ENCODE measurements at regions of chr2 and their contacts with region 1.

Region 1: GRCh38 chr2:15142069-15142873 is 418.9 kb downstream of the NBAS start:
- DNase-seq: peak; percentile 89
- ATAC-seq: peak; percentile 95
- H3K4me3 Mint-ChIP-seq: peak overlapping the region; percentile 35
- H3K27ac Mint-ChIP-seq: peak overlapping the region; percentile 93
- H3K4me1 Mint-ChIP-seq: peaks cover 26% of the 10 kb centered on the region
- H3K27me3 Mint-ChIP-seq: peaks cover 3% of the 10 kb centered on the region

Region 2: GRCh38 chr2:15591692-15592463 is 449.6 kb after region 1 on chr2 and contains the start of gene DDX1:
- CTCF ChIA-PET with region 1: no interaction called
- POLR2A ChIA-PET with region 1: no interaction called
- intact Hi-C with region 1: loop called (anchors 1 to 2 kb)
- DNase-seq: peak; percentile 92
- ATAC-seq: peak; percentile 94
- H3K4me3 Mint-ChIP-seq: peak within 1 kb of the TSS; percentile 90
- H3K27ac Mint-ChIP-seq: peak within 1 kb of the TSS; percentile 98
- H3K4me1 Mint-ChIP-seq: peaks cover 36% of the 10 kb centered on the region
- H3K27me3 Mint-ChIP-seq: no peaks in the 10 kb centered on the region
- total RNA-seq, gene DDX1: 87.6 to 96.2 TPM